Activated naive CD4-positive, alpha-beta T cell treated with anti-CD3 and anti-CD28 coated beads for 36 hours (primary cell): ENCODE measurements at regions of chr9 and their contacts with region 1.

Region 1: DNA sequence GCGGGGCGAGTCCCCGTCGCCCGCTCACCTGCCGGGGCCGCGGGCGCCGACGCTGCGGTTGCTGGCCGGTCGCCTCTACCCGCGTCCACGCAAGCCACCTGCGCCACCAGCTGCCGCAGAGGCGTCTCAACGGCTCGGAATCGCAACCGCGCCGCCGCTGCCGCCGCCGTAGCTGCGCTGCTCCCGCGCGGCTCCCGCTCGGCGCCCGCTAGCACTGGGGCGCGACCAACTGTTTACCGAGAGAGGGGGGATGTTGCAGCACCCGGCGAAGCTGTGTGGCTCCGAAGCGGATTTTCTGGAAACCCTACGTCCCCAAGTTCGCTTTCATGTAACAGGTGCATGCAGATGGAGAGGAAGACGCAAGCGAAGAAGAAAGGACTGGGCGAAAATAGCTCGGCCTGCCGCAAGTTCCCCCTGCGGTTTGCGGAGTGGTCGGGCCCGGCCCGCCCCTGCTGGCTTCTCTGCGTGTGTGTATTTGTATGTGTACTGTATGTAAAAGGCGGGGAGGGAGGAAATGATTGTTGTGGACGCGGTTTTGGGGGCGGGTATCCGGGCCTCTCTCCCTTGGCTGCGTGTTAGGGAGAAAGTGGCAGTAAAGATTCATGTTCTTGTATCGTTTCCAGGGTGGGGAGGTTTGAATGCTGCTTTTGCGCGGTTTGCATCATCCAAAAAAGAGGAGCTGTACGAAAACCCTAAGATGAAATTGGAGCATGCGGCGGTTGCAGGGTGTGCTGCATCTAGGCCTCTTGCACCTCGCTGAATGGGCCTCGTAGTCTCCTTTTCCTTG is at the start of gene PSIP1:
- DNase-seq: peak; percentile 91
- H3K4me3 Mint-ChIP-seq: peak within 1 kb of the TSS; percentile 92
- H3K27ac Mint-ChIP-seq: peak within 1 kb of the TSS; percentile 98
- H3K4me1 Mint-ChIP-seq: peaks cover 51% of the 10 kb centered on the region
- H3K27me3 Mint-ChIP-seq: no peaks in the 10 kb centered on the region
- total RNA-seq, gene PSIP1: 161 to 164 TPM

Region 2: GRCh38 chr9:14993061-14993800 is 517.8 kb before region 1 on chr9:
- CTCF ChIA-PET with region 1: no interaction called
- intact Hi-C with region 1: loop called (anchors 5 kb)
- DNase-seq: peak; percentile 76
- H3K4me3 Mint-ChIP-seq: peak overlapping the region; percentile 76
- H3K27ac Mint-ChIP-seq: peak overlapping the region; percentile 74
- H3K4me1 Mint-ChIP-seq: peaks cover 30% of the 10 kb centered on the region
- H3K27me3 Mint-ChIP-seq: no peaks in the 10 kb centered on the region

Region 3: GRCh38 chr9:15231788-15232635 is 279.0 kb before region 1 on chr9:
- CTCF ChIA-PET with region 1: no interaction called
- intact Hi-C with region 1: loop called (anchors 5 kb)
- DNase-seq: peak; percentile 25
- H3K4me3 Mint-ChIP-seq: no peak overlapping the region
- H3K27ac Mint-ChIP-seq: no peak overlapping the region
- H3K4me1 Mint-ChIP-seq: peaks cover 47% of the 10 kb centered on the region
- H3K27me3 Mint-ChIP-seq: no peaks in the 10 kb centered on the region

Region 4: GRCh38 chr9:15306757-15307534 is 204.0 kb before region 1 on chr9 and contains the start of gene TTC39B:
- CTCF ChIA-PET with region 1: no interaction called
- intact Hi-C with region 1: loop called (anchors 1 kb)
- DNase-seq: peak; percentile 86
- H3K4me3 Mint-ChIP-seq: peak within 1 kb of the TSS; percentile 99
- H3K27ac Mint-ChIP-seq: peak within 1 kb of the TSS; percentile 95
- H3K4me1 Mint-ChIP-seq: peaks cover 57% of the 10 kb centered on the region
- H3K27me3 Mint-ChIP-seq: no peaks in the 10 kb centered on the region
- total RNA-seq, gene TTC39B: 43.9 to 46.4 TPM

Region 5: DNA sequence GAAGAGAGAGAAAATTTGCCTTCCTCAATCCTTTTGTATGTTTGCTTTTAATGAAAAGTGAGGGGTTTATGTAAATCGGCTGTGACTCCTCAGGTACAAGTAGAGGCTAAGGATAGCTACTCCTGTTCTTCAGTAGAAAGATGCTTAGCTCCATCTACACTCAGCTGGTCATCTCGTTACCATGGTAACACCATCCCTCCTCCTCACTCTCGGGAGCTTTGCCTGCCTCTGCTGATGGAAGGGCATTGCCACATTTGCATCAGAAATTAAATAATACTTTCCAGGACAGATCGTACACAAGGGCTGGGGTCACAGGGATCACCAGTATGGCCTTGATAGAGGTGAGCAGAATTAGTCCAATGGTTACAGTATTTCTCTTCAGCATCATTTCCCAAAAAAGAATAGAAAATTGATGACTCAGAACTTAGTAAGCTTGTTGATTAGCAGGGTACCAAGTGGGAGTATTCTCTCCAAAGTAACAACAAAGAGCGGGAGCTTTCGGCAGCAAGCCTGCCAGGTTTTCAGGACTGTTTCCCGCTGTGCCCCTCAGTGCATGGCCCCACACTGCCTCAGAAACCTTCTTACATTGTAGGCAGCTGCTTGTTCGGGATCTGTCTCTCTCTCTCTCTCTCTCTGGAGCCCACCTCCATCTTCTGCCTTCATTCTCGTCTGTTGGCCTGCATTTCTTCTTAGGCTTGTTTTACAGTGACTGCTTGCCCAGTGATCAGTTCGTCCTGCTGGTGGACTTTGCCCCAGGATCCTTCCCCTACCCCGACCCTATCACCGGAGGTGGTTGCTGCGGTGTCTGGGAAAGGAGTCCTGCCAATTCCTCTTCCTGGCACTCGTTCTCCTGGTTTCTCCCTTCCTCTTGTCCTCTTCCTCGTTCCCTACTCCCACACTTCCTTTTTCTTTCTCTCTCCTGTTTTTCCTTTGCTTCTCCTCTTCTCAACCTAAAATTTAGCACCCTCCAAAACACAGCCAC is 140.2 kb before region 1 on chr9:
- CTCF ChIA-PET with region 1: no interaction called
- intact Hi-C with region 1: no loop called
- DNase-seq: no peak
- H3K4me3 Mint-ChIP-seq: no peak overlapping the region
- H3K27ac Mint-ChIP-seq: no peak overlapping the region
- H3K4me1 Mint-ChIP-seq: no peaks in the 10 kb centered on the region
- H3K27me3 Mint-ChIP-seq: no peaks in the 10 kb centered on the region

Region 6: GRCh38 chr9:15485836-15486666 is 24.9 kb before region 1 on chr9:
- CTCF ChIA-PET with region 1: no interaction called
- intact Hi-C with region 1: loop called (anchors 1 kb)
- DNase-seq: no peak
- H3K4me3 Mint-ChIP-seq: no peak overlapping the region
- H3K27ac Mint-ChIP-seq: peak overlapping the region; percentile 80
- H3K4me1 Mint-ChIP-seq: peaks cover 47% of the 10 kb centered on the region
- H3K27me3 Mint-ChIP-seq: no peaks in the 10 kb centered on the region

Region 7: GRCh38 chr9:15529566-15530324 is 18.8 kb after region 1 on chr9:
- CTCF ChIA-PET with region 1: interaction called, 7 read pairs
- intact Hi-C with region 1: loop called (anchors 1 kb)
- DNase-seq: no peak
- H3K4me3 Mint-ChIP-seq: no peak overlapping the region
- H3K27ac Mint-ChIP-seq: no peak overlapping the region
- H3K4me1 Mint-ChIP-seq: peaks cover 11% of the 10 kb centered on the region
- H3K27me3 Mint-ChIP-seq: no peaks in the 10 kb centered on the region

Region 8: DNA sequence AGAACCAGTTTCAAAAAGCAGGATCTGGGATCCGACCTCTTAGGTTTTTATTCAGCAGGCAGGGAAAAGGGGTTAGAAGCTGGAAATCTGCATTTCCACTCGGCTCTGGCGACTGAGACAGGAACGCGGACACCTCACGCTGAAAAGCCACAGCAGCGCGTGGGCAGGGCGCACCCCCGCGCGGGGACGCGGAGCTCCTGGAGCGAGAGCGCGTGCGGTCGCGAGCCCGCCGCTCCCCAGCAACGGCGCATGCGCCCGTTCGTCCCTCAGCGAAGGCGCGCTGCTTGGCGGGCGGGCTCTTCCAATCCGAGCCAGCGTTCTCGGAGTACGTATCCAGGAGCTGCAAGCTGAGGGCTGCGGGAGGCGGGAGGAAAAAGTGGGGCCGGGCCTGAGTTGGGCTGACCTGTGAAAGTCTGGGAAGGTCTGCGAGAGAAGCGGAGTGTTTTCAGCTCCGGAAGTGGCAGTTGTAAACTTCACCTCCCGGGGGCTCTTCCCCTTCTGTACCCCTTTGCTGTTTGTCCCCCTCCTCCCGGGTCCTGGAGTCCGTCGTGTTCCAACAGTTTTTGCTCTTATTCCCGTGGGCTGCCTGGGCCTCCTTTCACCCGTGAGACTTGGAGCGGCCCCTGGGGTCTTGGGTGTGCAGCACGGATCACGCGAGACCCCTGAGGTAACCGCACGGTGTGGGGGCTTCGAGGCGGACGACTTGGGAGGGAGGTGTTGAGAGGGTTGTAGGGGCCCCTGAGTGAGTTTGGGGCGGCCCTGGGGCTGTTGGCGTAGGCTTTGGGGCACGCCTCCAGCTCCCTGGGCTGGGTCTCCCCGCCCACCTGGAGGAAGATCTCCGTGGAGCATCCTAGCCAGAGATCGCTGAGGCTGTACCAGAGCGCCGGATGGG is 41.9 kb after region 1 on chr9 and contains the start of gene CCDC171:
- CTCF ChIA-PET with region 1: interaction called, 4 read pairs
- intact Hi-C with region 1: loop called (anchors 1 kb)
- DNase-seq: peak; percentile 90
- H3K4me3 Mint-ChIP-seq: peak within 1 kb of the TSS; percentile 86
- H3K27ac Mint-ChIP-seq: peak within 1 kb of the TSS; percentile 78
- H3K4me1 Mint-ChIP-seq: peaks cover 5% of the 10 kb centered on the region
- H3K27me3 Mint-ChIP-seq: no peaks in the 10 kb centered on the region
- total RNA-seq, gene CCDC171: 2.0 to 2.7 TPM